CD4-positive, alpha-beta memory T cell (primary cell): ENCODE measurements at regions of chr5 and their contacts with region 1.

Region 1: GRCh38 chr5:173293817-173294672 is 34.2 kb downstream of the STC2 start:
- DNase-seq: peak in 4 of 5 donors; percentile 45 to 50 (median 49)
- H3K4me3 ChIP-seq: peak overlapping the region in 1 of 2 donors; percentile 10
- H3K4me3 Mint-ChIP-seq: peak overlapping the region; percentile 41 to 88 (median 68)
- H3K27ac ChIP-seq: no peak overlapping the region
- H3K27ac Mint-ChIP-seq: no peak overlapping the region
- H3K4me1 ChIP-seq: peaks cover 16% of the 10 kb centered on the region
- H3K4me1 Mint-ChIP-seq: peaks cover 11 to 15% (median 13%) of the 10 kb centered on the region in 4 donors
- H3K27me3 ChIP-seq: no peaks in the 10 kb centered on the region
- H3K27me3 Mint-ChIP-seq: peaks cover 36 to 39% of the 10 kb centered on the region in 2 donors

Region 2: DNA sequence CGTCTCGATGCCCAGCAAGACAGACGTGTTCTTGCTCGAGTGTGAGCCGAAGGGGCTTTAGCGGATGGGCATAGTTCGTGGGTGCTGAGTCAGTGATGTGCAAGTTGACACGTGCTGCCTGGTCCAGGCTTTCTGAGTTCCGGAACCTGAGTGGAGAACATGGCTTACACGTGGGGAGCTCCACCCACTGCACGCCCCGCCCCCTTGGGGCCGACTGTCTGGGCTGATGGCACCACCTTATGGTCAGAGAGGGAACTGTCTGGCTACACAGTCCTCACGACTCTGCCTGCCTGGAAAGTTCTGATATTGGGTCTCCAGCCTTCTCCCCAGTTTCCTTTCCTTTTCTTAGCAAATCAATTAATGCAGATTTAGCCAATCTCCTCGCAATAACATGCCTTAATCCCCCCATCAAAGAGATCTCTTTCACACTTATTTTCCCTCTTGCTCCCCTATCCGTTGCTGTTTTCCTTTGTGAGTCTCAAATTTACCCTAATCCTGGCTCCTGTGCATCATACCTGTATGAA is 38.0 kb after region 1 on chr5:
- CTCF ChIA-PET with region 1: interaction called, 7 read pairs
- POLR2A ChIA-PET with region 1: interaction called, 4 read pairs
- intact Hi-C with region 1: loop called (anchors 5 kb)
- DNase-seq: peak; percentile 41 to 66 (median 51)
- H3K4me3 ChIP-seq: no peak overlapping the region
- H3K4me3 Mint-ChIP-seq: no peak overlapping the region
- H3K27ac ChIP-seq: no peak overlapping the region
- H3K27ac Mint-ChIP-seq: no peak overlapping the region
- H3K4me1 ChIP-seq: no peaks in the 10 kb centered on the region
- H3K4me1 Mint-ChIP-seq: peaks cover 3 to 16% (median 13%) of the 10 kb centered on the region in 4 donors
- H3K27me3 ChIP-seq: peaks cover 10% of the 10 kb centered on the region
- H3K27me3 Mint-ChIP-seq: peaks cover 33 to 44% of the 10 kb centered on the region in 2 donors

Region 3: DNA sequence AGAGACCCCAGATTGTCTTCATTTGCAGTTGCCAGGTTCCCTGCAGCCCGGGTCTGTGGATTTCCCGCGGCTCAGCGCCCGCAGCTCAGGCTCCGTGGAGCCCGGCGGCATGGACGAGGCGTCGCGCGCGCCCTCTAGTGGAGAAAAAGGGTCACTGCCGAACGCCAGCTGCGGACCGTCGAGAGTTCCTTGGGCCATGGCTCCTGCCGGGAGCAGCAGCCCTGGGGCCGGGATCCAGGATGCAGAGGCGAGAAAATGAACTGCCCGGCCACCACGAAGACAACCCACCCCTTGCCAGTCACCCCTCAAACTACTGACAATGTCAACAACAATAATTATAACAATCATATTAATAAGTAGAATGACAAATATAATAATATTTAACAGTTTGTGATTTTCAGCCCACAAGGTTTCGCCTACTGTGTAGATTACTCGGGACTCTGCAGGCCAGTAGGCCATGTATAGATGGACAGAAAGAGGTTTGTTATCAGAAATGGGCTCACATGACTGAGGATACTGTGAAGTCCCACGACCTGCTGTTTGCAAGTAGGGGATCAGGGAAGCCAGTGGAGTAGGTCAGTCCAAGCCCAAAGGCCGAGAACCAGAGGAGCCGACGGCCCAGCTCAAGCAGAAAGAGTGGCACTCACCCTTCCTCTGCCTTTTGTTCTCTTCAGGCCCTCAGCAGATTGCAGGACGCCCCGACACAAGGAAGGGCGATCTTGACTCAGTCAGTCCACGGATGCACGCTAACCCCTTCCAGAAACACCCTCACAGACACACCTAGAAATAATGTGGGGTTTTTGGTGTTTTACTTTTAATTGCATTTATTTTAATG is 279.3 kb after region 1 on chr5:
- CTCF ChIA-PET with region 1: interaction called, 6 read pairs
- POLR2A ChIA-PET with region 1: no interaction called
- intact Hi-C with region 1: loop called (anchors 1 kb)
- DNase-seq: peak; percentile 39 to 53 (median 50)
- H3K4me3 ChIP-seq: peak overlapping the region in 1 of 2 donors; percentile 19
- H3K4me3 Mint-ChIP-seq: peak overlapping the region in 2 of 8 donors; percentile 6
- H3K27ac ChIP-seq: no peak overlapping the region
- H3K27ac Mint-ChIP-seq: peak overlapping the region in 1 of 7 donors; percentile 20
- H3K4me1 ChIP-seq: peaks cover 4% of the 10 kb centered on the region
- H3K4me1 Mint-ChIP-seq: peaks cover 3 to 10% (median 6%) of the 10 kb centered on the region in 4 donors
- H3K27me3 ChIP-seq: peaks cover 5% of the 10 kb centered on the region
- H3K27me3 Mint-ChIP-seq: peaks cover 8 to 20% of the 10 kb centered on the region in 2 donors

Region 4: GRCh38 chr5:173972925-173973615 is 679.0 kb after region 1 on chr5:
- CTCF ChIA-PET with region 1: interaction called, 6 read pairs
- POLR2A ChIA-PET with region 1: no interaction called
- intact Hi-C with region 1: loop called (anchors 1 kb)
- DNase-seq: peak; percentile 64 to 73 (median 70)
- H3K4me3 ChIP-seq: peak overlapping the region in 1 of 2 donors; percentile 61
- H3K4me3 Mint-ChIP-seq: peak overlapping the region; percentile 66 to 81 (median 77)
- H3K27ac ChIP-seq: no peak overlapping the region
- H3K27ac Mint-ChIP-seq: peak overlapping the region in 1 of 7 donors; percentile 14
- H3K4me1 ChIP-seq: peaks cover 12% of the 10 kb centered on the region
- H3K4me1 Mint-ChIP-seq: peaks cover 5 to 11% (median 8%) of the 10 kb centered on the region in 4 donors
- H3K27me3 ChIP-seq: no peaks in the 10 kb centered on the region
- H3K27me3 Mint-ChIP-seq: peaks cover 10 to 12% of the 10 kb centered on the region in 2 donors